ENCODE measurements at regions of chr15 and their contacts with region 1.

Region 1: DNA sequence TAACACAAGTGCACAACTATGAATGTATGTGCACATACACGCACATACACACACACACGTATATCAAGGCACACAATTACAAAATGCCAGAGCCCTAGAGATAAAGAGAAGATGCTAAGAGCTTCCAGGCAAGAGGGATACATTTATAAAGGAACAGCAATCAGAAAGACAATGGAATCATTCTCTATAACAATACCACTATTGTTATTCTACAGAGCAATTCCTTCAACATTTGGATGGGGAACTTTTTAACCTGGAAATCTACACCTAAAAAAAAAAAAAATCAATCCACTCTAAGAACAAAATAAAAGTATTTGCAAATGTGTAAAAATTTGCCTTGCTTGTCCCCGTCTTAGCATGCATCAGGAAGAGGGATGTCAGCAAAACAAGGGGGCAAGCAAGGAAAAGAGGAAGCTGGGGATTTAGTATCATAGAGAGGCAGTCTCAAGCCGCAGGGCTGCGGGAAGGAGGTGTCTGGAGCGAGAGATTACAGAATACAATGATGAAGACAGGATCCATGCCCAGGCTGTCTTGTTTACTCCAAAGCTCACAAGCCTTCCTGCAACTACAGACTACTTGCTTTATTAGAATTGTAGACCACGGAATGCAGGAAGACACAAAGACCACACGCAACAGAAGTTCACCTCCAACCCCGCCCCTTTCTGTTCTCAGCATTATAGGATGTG is 220.2 kb downstream of the NTRK3 start:
- DNase-seq: no peak
- H3K4me3 ChIP-seq: no peak overlapping the region
- H3K27ac ChIP-seq: no peak overlapping the region
- H3K4me1 ChIP-seq: no peaks in the 10 kb centered on the region
- H3K27me3 ChIP-seq: no peaks in the 10 kb centered on the region
- CTCF ChIP-seq: no peak

Region 2: GRCh38 chr15:88015228-88015860 is 21.0 kb before region 1 on chr15:
- CTCF ChIA-PET with region 1: no interaction called
- dilution Hi-C with region 1: no loop called
- in situ Hi-C with region 1: no loop called
- intact Hi-C with region 1: no loop called
- DNase-seq: no peak
- H3K4me3 ChIP-seq: no peak overlapping the region
- H3K27ac ChIP-seq: no peak overlapping the region
- H3K4me1 ChIP-seq: no peaks in the 10 kb centered on the region
- H3K27me3 ChIP-seq: no peaks in the 10 kb centered on the region
- CTCF ChIP-seq: no peak

Region 3: DNA sequence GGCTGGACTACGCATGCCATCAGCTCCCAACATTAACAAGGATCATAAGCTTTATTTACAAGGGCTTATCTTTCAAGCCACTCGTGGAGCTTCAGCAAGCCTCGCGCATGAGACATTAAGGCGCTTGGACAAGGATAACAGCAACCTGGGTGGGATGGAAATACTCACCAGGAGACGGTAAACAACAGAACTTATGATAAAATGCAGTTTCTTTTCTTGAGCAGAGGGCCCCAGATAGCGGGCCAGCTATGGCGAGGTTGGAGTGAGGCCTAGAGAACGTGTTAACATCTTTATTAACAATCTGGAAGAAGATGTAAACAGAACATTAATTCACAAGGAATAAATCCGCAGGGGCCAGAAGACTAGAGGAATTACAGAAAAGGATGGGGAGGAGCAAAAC is 62.1 kb after region 1 on chr15:
- CTCF ChIA-PET with region 1: no interaction called
- dilution Hi-C with region 1: loop called (anchors 5 kb)
- in situ Hi-C with region 1: no loop called
- intact Hi-C with region 1: no loop called
- DNase-seq: no peak
- H3K4me3 ChIP-seq: no peak overlapping the region
- H3K27ac ChIP-seq: no peak overlapping the region
- H3K4me1 ChIP-seq: no peaks in the 10 kb centered on the region
- H3K27me3 ChIP-seq: no peaks in the 10 kb centered on the region
- CTCF ChIP-seq: no peak

Region 4: DNA sequence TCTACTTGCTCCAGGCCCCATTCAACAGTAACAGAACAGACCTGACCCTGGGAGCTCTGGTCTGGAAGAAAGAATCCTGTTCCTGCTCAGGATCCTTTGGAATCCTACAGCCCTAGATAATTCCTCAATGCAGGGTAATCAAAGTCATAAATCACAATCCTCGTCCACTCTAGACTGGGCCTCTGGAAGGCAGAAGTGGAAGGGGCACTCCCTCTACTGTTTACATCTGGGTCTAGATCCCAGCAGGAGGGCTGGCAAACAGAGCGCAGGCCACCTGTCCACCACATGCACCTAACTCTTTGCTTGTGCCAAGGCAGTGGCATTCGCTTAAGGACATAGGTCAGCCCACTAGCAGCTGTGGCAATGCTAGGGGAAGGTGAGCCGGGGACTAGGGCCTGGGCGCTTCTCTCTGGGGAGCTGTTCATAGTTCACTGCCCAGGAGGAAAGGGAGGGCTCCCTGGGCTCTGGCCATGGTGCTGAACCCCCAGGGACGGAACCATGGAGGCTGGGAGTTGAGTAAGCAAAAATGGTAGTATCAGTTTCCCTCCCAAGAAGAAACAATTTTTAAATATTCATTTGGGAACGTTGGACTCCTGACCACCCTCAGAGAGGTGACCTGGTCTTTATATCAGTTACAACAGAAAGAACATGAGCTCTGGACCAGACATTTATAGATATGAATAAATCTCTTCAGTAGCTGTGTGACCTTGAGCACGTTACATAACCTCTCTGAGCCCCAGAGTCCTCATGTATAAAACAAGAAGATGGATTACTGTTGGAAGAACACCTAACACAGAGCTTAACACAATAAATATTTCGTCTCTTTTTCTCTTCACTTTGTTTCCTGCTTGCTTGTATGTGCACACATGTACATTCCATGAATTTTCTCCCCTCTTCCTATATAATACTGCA is 130.0 kb after region 1 on chr15:
- CTCF ChIA-PET with region 1: no interaction called
- dilution Hi-C with region 1: no loop called
- in situ Hi-C with region 1: no loop called
- intact Hi-C with region 1: no loop called
- DNase-seq: no peak
- H3K4me3 ChIP-seq: no peak overlapping the region
- H3K27ac ChIP-seq: no peak overlapping the region
- H3K4me1 ChIP-seq: no peaks in the 10 kb centered on the region
- H3K27me3 ChIP-seq: no peaks in the 10 kb centered on the region
- CTCF ChIP-seq: no peak